GM10248 (cell line): ENCODE measurements at regions of chr4 and their contacts with region 1.

Region 1: GRCh38 chr4:97016186-97016907 is 1126.9 kb downstream of the STPG2 start:
- DNase-seq: no peak
- CTCF ChIP-seq: no peak

Region 2: DNA sequence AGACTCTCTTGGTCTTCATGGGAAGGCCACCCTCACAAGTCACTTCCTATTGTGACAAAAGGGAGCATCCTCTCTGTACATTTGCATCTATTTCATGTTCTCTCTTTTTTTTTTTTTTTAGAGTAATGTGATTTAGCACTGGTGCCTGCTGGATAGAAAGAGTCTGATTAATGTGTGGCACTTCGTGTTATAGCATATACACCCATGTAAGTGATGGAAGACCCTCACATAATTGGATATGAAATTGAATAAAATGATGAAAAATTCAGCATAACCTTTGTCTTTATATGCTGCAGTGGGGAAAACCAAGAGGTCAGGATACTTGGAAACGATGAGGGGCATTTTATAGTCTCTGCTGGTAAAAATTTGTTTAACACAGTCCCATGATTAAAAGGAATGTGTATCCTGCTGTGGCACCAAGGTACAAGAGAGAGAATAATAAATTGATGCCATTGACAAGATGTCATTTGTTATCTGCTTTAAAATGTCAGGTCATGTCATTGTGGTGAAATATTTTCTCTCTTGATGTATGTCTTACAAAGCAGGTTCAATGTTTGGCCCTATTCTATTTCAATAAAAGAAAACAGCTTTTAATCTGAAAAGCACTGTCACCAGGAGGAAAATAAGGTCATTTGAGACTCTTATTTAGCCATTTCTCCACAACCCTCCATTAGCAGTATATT is 11.5 kb after region 1 on chr4:
- CTCF ChIA-PET with region 1: interaction called, 27 read pairs
- POLR2A ChIA-PET with region 1: no interaction called
- DNase-seq: no peak
- CTCF ChIP-seq: no peak

Region 3: GRCh38 chr4:97174371-97174770 is 158.0 kb after region 1 on chr4:
- CTCF ChIA-PET with region 1: no interaction called
- POLR2A ChIA-PET with region 1: no interaction called
- DNase-seq: no peak
- CTCF ChIP-seq: no peak